GM18951 (cell line): ENCODE measurements at regions of chr22 and their contacts with region 1.

Region 1: DNA sequence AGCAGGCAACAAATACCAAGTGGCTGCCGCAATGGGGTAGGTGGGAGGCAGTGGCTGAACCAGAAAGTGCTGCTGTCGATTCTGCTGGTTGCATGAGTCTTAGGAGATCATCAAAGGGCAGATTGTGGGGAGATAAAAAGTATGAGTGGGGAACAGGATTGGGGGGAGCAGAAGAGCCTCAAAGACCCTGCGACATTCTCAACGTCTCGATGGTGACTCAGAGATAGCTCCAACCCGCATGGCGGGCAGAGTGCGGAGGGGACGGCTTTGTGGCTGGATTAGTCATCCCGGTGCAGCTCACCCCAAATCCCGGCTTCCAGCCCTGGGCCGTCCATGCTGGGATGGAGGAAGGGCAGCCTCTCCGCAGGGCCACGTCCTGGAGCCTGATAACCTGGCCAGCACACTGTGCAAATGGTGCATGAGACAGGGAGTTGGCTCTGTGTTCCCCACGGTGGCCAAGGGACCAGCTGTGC is 11.6 kb upstream of the RTN4R start:
- POLR2A ChIP-seq: no peak

Region 2: GRCh38 chr22:18962308-18962635 is 1317.4 kb before region 1 on chr22:
- in situ Hi-C with region 1: loop called (anchors 5 kb)
- POLR2A ChIP-seq: no peak